GM12878 (cell line): ENCODE measurements at regions of chr1 and their contacts with region 1.

Region 1: DNA sequence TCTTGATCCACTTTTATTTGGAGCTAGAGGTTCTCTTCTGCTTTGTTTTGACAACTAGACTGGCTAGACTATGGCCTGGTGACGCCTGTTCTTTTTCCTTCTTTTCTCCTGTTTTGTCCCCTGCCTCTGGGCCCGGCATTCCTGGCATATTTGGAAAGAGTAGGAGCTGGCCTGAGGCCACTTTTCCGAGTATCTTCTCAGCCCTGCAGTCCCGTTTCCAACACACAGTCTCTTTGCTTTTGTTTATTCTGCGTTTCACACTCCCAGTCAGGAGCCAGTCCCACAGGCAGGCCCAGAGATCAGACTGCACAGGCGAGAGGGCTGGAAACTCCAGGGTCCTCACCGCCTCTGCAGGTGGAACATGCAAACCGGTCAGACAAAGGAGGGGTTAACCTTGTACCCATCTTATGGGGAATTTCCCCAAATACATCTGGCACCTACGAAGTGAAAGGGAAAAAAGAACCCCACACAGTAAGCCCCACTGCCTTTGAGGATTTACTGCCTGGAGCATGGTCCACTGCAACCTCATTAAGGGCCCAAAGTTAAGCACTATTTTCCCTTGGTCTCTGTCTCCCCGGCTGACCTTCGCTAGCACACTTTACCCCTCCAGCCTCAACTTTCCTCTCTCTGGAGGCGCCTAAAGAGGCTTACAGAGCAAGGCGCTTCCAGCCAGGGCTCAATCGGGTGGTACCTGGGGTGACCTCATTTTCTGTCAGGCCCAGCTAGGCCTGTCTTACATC is 141.1 kb downstream of the TOMM20 start:
- DNase-seq: no peak
- ATAC-seq: peak; percentile 81
- H3K4me3 ChIP-seq: no peak overlapping the region
- H3K27ac ChIP-seq: peak overlapping the region; percentile 80
- H3K4me1 ChIP-seq: peaks cover 62% of the 10 kb centered on the region
- H3K27me3 ChIP-seq: no peaks in the 10 kb centered on the region
- CTCF ChIP-seq: no peak
- EP300 ChIP-seq: peak in 1 of 2 experiments; percentile 24; a peak in 1 of 4 replicates
- POLR2A ChIP-seq: no peak; the same call in 1 of the 2 replicates
- RAD21 ChIP-seq: no peak

Region 2: DNA sequence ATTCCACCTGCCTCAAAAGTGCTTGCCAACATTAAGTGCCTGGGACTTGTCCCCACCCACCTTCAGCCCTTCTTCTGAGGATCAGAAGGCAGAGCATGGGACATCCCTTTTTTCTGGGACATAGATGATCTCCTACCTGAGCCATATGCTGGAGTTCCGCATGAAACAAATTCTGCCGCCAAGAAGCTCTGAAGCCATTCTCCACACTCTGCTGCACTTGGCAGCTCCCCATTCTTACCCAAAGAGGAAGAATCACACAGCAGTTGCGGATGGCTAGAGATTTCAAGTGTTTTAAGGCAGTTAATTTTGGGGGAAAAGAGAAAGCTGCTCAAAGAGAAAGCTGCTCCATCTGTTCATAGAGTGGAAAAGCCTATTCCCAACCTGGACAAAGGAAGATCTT is 811.6 kb before region 1 on chr1:
- CTCF ChIA-PET with region 1: no interaction called
- POLR2A ChIA-PET with region 1: no interaction called
- RAD21 ChIA-PET with region 1: no interaction called
- SMC1A ChIA-PET with region 1: no interaction called
- in situ Hi-C with region 1: no loop called
- intact Hi-C with region 1: no loop called
- DNase-seq: no peak
- ATAC-seq: no peak
- H3K4me3 ChIP-seq: no peak overlapping the region
- H3K27ac ChIP-seq: no peak overlapping the region
- H3K4me1 ChIP-seq: no peaks in the 10 kb centered on the region
- H3K27me3 ChIP-seq: peaks cover 0 to 2% of the 10 kb centered on the region in 2 experiments; a peak in 1 of 4 replicates
- CTCF ChIP-seq: no peak
- EP300 ChIP-seq: no peak
- POLR2A ChIP-seq: no peak
- RAD21 ChIP-seq: no peak

Region 3: DNA sequence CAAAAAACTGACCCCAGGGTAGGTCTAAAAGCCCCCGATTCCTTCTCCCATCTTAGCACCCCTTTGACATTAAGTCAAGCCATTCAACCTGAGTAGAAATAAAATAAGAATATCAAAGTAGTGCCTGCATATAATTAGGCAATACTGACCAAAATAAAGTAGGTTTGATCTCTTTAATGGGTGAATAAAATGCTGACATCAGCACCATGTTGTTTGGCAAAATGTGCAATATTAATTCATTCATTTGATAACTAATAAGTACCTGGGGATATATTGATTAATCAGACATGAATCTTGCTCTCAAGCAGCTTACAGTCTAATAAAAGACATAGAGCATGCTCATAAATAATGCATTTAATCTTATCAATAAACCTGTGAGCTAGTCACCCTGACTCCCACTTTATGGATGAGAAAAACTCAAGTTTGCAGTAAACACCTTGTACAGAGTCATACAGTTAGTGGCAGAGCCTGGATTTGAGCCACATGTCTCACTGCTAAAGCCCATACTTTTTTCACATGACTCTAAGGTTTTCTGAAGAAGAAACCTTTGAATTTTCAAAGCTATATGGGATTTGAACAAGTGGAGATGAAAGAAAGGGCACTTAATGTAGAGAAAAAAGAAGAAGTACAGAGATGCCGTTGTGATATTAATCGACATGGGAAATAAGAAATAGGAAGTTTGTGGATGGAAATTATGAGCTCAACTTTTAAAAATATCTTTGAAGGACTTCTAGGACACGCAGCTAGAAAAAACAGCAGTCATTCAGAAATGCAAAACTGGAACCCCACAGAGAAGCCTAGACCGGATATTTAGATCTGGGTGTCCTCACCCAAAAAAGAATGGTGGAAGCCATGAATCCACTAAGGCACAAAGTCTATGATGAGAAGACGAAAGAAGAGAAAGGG is 42.9 kb before region 1 on chr1:
- CTCF ChIA-PET with region 1: no interaction called
- POLR2A ChIA-PET with region 1: no interaction called
- RAD21 ChIA-PET with region 1: no interaction called
- SMC1A ChIA-PET with region 1: no interaction called
- in situ Hi-C with region 1: no loop called
- intact Hi-C with region 1: no loop called
- DNase-seq: no peak
- ATAC-seq: peak; percentile 75
- H3K4me3 ChIP-seq: no peak overlapping the region
- H3K27ac ChIP-seq: peak overlapping the region; percentile 69
- H3K4me1 ChIP-seq: peaks cover 16% of the 10 kb centered on the region; the same call in 1 of the 2 replicates
- H3K27me3 ChIP-seq: no peaks in the 10 kb centered on the region
- CTCF ChIP-seq: no peak
- EP300 ChIP-seq: no peak; a peak in 1 of 4 replicates
- POLR2A ChIP-seq: no peak
- RAD21 ChIP-seq: no peak

Region 4: GRCh38 chr1:235006132-235006943 is 18.8 kb after region 1 on chr1:
- CTCF ChIA-PET with region 1: interaction called, 13 read pairs
- POLR2A ChIA-PET with region 1: interaction called, 11 read pairs
- RAD21 ChIA-PET with region 1: interaction called, 82 read pairs
- SMC1A ChIA-PET with region 1: interaction called, 108 read pairs
- in situ Hi-C with region 1: no loop called
- intact Hi-C with region 1: loop called (anchors 1 kb)
- DNase-seq: peak; percentile 74
- ATAC-seq: peak; percentile 44
- H3K4me3 ChIP-seq: no peak overlapping the region
- H3K27ac ChIP-seq: peak overlapping the region; percentile 79
- H3K4me1 ChIP-seq: peaks cover 81% of the 10 kb centered on the region
- H3K27me3 ChIP-seq: no peaks in the 10 kb centered on the region
- CTCF ChIP-seq: no peak
- EP300 ChIP-seq: no peak
- POLR2A ChIP-seq: no peak
- RAD21 ChIP-seq: no peak

Region 5: DNA sequence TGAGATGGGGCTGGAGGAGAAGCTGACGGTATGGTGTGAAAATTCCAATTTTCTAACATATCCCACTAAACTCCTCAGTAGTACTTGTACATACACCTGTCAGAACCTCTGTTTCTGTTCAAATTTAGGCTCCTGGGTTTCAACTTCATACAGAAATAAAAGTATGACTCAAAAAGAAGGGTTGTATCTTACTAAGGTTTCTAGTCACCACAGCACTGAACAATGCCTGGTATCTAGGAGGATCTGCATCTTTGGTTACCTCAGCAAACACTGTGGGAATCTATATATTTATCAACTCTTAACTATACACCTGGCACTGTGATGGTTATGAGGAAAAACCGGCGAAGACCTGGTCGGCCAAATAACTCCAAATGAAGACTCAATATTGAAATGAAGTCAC is 159.7 kb after region 1 on chr1:
- CTCF ChIA-PET with region 1: no interaction called
- POLR2A ChIA-PET with region 1: no interaction called
- RAD21 ChIA-PET with region 1: no interaction called
- SMC1A ChIA-PET with region 1: no interaction called
- in situ Hi-C with region 1: no loop called
- intact Hi-C with region 1: no loop called
- DNase-seq: no peak
- ATAC-seq: peak; percentile 74
- H3K4me3 ChIP-seq: no peak overlapping the region
- H3K27ac ChIP-seq: peak overlapping the region; percentile 62; the same call in 1 of the 2 replicates
- H3K4me1 ChIP-seq: peaks cover 18% of the 10 kb centered on the region
- H3K27me3 ChIP-seq: no peaks in the 10 kb centered on the region
- CTCF ChIP-seq: no peak
- EP300 ChIP-seq: no peak; a peak in 1 of 4 replicates
- POLR2A ChIP-seq: no peak
- RAD21 ChIP-seq: no peak